Testis (tissue), 5 donors: ENCODE measurements at regions of chr1 and their contacts with region 1.

Region 1: DNA sequence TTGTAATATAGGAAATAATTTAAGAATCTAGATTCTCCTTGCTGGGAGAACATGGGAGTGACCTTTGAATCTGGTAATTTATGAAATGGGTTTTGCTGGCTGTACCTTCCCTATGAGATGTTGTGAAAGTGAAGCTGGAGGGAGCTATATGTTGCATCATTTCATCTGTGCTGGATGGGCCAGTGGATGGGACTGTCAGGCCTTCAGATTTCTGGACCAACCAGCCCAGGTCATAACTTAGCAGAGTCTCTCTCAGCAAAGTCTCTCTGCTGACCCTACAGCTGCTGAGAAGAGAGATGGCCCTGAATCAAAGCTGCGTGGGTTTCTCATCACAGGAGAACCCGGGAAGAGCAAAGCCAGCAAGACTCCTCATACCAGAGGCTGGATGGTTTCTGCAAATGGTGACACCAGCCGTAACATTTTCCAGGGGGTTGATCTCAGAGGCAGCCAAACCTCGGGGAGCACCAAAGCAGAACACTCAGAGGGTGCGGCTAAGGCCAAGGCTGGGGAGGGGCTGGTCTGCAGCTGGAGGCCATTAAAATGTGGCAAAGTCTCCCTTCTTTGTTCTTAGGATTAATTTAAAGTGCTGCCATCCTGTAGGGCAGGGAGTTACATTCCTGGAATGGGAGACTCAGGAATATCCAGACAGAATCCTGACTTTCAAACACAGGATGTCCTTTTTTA is 18.2 kb upstream of the PTGFRN start:
- DNase-seq: no peak
- H3K4me3 ChIP-seq: no peak overlapping the region
- H3K27ac ChIP-seq: no peak overlapping the region
- H3K4me1 ChIP-seq: no peaks in the 10 kb centered on the region
- H3K27me3 ChIP-seq: no peaks in the 10 kb centered on the region
- CTCF ChIP-seq: no peak
- POLR2A ChIP-seq: no peak

Region 2: GRCh38 chr1:116514708-116515525 is 376.6 kb before region 1 on chr1:
- intact Hi-C with region 1: no loop called
- DNase-seq: no peak
- H3K4me3 ChIP-seq: no peak overlapping the region
- H3K27ac ChIP-seq: no peak overlapping the region
- H3K4me1 ChIP-seq: no peaks in the 10 kb centered on the region
- H3K27me3 ChIP-seq: no peaks in the 10 kb centered on the region
- CTCF ChIP-seq: no peak
- POLR2A ChIP-seq: no peak

Region 3: DNA sequence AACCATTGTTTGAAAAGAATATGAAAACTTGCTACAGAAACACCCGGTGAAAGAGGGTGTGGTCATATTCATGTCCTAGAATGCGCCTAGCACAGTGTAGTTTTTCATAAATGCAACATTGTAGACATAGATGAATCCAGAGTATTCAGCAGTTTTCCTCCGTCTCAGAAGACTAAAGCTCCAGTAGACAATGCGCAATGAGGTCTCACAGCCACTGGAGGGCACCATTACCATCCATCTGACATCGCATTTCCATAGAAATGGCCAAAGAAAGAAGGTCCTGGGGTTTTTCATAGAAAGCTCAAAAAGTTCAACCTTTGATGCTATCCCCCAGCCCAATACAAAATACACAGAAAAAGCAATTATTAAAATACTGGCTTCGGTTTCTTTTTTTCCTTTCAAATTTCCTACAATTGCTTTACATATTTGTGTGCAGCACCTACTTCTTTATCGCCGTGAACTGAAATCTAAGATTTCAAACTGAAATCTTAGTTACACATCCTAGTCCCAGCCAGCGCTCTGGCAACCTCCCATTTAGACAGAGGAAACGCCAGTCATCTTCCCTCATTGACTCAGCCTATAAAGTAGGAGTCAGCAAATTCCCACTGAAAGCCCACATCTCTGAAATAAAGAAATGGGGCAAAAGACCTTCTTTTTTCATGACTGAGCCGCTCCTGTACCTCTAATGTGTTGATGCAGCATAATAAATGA is 316.8 kb before region 1 on chr1:
- intact Hi-C with region 1: loop called (anchors 5 kb)
- DNase-seq: peak; percentile 80
- H3K4me3 ChIP-seq: no peak overlapping the region
- H3K27ac ChIP-seq: no peak overlapping the region
- H3K4me1 ChIP-seq: peaks cover 10% of the 10 kb centered on the region
- H3K27me3 ChIP-seq: no peaks in the 10 kb centered on the region
- CTCF ChIP-seq: peak; percentile 68 to 89 (median 81)
- POLR2A ChIP-seq: no peak